ENCODE measurements at regions of chr10 and their contacts with region 1.

Region 1: GRCh38 chr10:87861953-87862678 is 1.2 kb downstream of the KLLN start:
- DNase-seq: peak; percentile 99

Region 2: DNA sequence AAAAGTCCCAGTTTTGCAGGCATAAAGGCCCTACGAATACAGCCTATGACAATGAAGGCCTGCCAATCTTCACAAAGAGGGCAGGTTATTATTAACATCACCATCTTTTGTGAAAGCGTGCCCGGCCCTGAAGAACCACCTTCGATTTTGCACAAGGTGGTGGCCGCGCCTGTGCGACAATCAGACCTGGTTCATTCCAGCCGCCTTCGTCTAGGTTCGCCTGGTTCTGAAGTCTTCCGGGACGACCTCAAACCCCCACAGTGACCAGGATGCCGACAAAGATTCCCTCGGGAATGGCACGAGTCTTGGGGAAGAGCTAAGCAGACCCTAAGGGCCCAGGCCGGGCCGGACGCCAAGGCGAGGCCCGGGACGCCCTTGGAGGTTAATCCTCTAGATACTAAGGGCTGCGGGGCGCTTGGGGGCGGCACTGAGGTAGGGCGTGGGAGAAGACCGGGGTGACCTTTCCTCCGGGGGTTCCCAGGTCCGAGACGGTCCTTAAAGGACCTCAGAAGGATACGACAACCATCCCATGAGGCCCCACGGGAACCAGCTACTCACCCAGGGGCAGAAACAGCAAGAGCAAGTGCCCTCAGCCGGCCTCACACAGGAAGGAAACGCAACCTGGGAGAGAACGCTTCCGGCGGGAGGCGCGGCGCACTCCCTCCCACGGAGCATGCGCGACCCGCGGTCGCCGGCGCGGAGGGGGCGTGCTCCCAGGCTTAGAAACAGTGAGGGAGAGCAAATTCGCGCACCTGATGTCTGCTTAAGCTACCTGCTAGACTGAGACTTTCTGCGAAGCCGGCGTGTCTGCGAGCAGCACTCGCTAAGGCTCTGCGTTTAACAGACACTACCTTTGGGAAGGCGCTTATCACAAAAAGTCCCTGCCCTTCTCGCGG is 44.3 kb before region 1 on chr10 and contains the start of gene ATAD1:
- intact Hi-C with region 1: no loop called
- DNase-seq: peak; percentile 93
- total RNA-seq, gene ATAD1: 45.3 to 47.3 TPM

Region 3: GRCh38 chr10:87887548-87888289 is 25.6 kb after region 1 on chr10:
- intact Hi-C with region 1: loop called in 1 of 2 experiments (anchors 1 kb)
- DNase-seq: no peak

Region 4: DNA sequence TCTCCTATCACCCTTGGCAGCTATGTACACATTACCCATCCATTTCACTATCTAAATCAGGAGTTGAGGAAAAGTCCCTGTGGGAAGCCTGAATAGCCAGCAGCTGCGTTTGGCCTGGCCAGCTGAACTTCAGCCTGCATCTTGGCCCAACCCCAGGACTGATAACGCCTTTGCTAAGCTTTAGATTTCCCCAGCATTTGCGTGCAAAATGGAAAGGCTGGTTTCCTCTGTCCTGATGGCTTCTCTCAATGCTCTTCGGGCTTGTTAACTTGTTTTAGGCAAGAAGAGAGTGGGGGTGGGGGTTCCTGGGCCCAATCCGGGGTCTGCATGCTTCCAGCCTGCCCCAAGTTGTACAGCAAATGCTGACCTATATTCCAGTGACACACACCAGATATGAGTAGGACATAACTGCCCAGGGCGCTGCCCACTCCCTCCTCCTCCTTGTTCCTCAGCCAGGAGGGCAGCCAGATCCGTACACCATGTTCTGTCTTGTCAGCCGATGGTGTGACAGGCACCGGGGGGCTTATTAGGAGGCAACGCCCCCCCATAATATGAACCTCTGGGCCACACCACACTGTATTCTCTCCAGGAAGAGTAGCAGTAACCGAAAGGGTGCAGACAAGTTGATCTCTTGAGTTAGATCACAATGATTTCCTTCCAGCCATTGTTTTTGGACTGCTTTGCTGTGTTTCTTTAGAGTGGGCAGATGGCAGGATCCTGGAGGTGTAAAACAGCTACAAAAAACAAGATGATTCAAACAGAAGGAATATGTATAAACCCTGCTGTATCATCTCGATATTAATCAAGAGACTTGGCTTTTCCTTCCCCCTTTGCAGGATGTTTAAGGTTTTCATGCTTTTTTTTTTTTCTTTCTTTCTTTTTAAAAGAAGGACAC is 382.0 kb after region 1 on chr10:
- intact Hi-C with region 1: loop called in 1 of 2 experiments (anchors 10 kb)
- DNase-seq: peak; percentile 88

Region 5: DNA sequence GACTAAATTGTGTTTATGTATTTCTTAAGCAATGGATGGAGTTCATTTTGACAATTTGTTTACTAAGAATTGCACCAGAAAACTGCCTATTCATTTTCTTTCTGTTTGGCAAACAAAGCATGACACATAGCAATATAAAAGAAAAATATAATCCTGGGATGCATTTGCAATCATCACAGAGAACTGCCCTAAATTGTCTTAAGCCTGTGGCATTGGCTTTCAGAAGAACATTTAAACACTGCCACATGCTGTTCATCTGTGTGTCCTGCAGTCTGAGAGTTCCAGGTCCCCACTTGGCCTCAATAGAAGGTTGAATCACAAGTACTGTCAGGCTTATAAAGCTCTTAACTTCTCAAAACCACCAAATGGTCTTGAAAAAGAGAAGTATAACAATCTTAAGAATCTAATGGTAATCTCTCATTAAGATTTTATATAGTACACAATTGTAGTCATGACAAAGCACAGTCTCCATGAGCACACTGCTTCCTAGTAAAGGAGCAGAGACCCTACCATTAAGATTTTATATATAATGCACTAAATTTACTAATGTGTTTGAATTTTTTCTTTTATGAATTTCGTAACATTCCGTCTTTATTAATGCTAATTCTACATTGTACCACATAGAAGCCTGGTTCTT is 691.1 kb after region 1 on chr10:
- intact Hi-C with region 1: loop called (anchors 10 kb)
- DNase-seq: no peak

Measured in posterior vena cava (tissue), 2 donors.